ENCODE measurements at regions of chr9 and their contacts with region 1.

Region 1: GRCh38 chr9:134449221-134449894 is 123.1 kb downstream of the RXRA start:
- DNase-seq: peak; percentile 82
- H3K4me3 ChIP-seq: no peak overlapping the region
- H3K27ac ChIP-seq: no peak overlapping the region
- H3K4me1 ChIP-seq: no peaks in the 10 kb centered on the region
- H3K27me3 ChIP-seq: no peaks in the 10 kb centered on the region
- CTCF ChIP-seq: peak; percentile 79 to 89

Region 2: DNA sequence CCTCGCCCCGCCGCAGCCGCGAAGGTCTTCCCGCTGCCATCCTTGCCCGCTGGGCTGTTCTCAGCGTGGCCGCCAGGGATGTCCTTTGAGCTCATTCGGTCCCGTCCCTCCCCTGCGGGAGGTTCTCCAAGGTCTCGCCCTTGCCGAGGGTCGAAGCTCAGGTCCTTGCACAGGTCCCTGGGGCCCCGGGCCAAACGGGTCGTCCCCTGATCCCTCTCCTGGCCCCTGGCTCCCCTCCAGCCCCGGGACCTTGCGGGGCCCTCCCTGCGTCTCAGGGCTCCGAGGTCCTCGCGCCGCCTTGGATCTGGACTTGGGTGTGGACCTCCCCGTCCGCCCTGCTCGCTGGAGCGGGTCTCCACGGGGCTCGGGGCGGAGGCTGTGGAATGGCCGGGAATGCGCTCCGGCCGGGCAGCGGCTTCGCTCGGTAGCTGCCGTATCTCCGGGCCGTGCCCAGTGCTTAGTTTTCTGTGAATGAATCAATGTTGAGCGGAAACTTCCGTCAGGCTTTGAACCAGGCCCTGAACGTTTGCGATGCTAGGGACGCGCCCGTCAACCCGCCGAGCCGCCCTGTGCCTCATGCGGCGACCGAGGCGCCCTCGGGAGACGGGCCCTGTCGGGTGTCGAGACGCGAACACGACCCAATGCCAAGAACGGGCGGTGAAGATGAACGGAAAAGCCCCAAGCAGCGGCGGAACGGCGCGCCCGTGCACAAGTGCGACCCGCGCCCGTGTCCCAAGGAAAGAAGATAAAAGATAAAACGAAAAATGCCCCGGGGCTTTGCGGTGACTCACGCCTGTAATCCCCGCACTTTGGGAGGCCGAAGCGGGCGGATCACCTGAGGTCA is 285.8 kb before region 1 on chr9:
- CTCF ChIA-PET with region 1: no interaction called
- dilution Hi-C with region 1: no loop called
- in situ Hi-C with region 1: loop called (anchors 5 to 10 kb)
- intact Hi-C with region 1: no loop called
- DNase-seq: peak; percentile 25
- H3K4me3 ChIP-seq: peak overlapping the region; percentile 24 to 45 (median 41)
- H3K27ac ChIP-seq: no peak overlapping the region
- H3K4me1 ChIP-seq: peaks cover 5% of the 10 kb centered on the region
- H3K27me3 ChIP-seq: no peaks in the 10 kb centered on the region
- CTCF ChIP-seq: peak in 1 of 2 donors; percentile 13

Region 3: GRCh38 chr9:134570151-134570621 is 120.8 kb after region 1 on chr9:
- CTCF ChIA-PET with region 1: no interaction called
- dilution Hi-C with region 1: no loop called
- in situ Hi-C with region 1: no loop called
- intact Hi-C with region 1: no loop called
- DNase-seq: no peak
- H3K4me3 ChIP-seq: no peak overlapping the region
- H3K27ac ChIP-seq: no peak overlapping the region
- H3K4me1 ChIP-seq: no peaks in the 10 kb centered on the region
- H3K27me3 ChIP-seq: no peaks in the 10 kb centered on the region
- CTCF ChIP-seq: no peak

Region 4: GRCh38 chr9:134660407-134660806 is 211.0 kb after region 1 on chr9:
- CTCF ChIA-PET with region 1: interaction called, 3 read pairs
- dilution Hi-C with region 1: no loop called
- in situ Hi-C with region 1: no loop called
- intact Hi-C with region 1: loop called (anchors 1 kb)
- DNase-seq: no peak
- H3K4me3 ChIP-seq: no peak overlapping the region
- H3K27ac ChIP-seq: no peak overlapping the region
- H3K4me1 ChIP-seq: no peaks in the 10 kb centered on the region
- H3K27me3 ChIP-seq: no peaks in the 10 kb centered on the region
- CTCF ChIP-seq: peak; percentile 31 to 40

Region 5: DNA sequence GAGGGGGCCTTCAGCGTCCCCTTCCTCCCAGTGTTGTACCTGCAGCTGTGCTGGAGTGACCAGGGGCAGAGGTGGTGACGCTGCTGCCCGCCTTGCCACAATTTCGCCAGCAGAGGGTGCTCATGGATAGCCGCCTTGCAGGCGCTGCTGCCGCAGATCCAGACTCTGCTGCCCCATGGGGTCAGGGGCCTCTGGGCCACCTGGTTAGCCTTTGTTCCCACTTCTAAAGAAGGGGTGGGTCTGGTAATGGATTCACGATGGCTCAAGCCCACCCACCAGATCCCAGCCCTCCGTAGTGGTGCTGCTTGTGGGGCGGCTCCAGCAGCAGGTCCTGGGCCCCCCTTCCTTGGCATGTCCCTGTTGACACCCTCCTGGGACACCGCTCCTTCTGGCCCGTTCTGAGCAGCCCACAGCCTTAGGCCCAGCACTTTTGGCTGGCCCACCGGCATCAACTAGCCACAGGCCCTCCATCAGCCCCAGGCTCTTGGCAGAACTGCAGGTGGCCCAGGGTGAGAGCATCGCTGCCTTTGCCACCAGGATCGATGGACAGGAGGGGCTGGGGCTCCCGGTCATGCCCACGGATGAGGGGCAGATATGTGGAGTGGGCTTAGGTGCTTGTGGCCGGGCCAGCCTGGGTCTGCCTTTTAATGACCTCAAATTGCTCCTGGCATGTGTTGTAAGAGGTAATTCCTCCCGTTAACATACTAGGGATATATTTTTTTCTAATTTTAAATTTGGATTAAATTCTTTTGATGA is 249.4 kb after region 1 on chr9:
- CTCF ChIA-PET with region 1: no interaction called
- dilution Hi-C with region 1: no loop called
- in situ Hi-C with region 1: no loop called
- intact Hi-C with region 1: loop called (anchors 1 kb)
- DNase-seq: peak; percentile 4
- H3K4me3 ChIP-seq: no peak overlapping the region
- H3K27ac ChIP-seq: no peak overlapping the region
- H3K4me1 ChIP-seq: no peaks in the 10 kb centered on the region
- H3K27me3 ChIP-seq: no peaks in the 10 kb centered on the region
- CTCF ChIP-seq: peak; percentile 32 to 53

Region 6: GRCh38 chr9:134858051-134858841 is 408.9 kb after region 1 on chr9:
- CTCF ChIA-PET with region 1: no interaction called
- dilution Hi-C with region 1: no loop called
- in situ Hi-C with region 1: no loop called
- intact Hi-C with region 1: loop called (anchors 1 kb)
- DNase-seq: peak; percentile 72
- H3K4me3 ChIP-seq: no peak overlapping the region
- H3K27ac ChIP-seq: no peak overlapping the region
- H3K4me1 ChIP-seq: no peaks in the 10 kb centered on the region
- H3K27me3 ChIP-seq: no peaks in the 10 kb centered on the region
- CTCF ChIP-seq: peak in 1 of 2 donors; percentile 18

Region 7: DNA sequence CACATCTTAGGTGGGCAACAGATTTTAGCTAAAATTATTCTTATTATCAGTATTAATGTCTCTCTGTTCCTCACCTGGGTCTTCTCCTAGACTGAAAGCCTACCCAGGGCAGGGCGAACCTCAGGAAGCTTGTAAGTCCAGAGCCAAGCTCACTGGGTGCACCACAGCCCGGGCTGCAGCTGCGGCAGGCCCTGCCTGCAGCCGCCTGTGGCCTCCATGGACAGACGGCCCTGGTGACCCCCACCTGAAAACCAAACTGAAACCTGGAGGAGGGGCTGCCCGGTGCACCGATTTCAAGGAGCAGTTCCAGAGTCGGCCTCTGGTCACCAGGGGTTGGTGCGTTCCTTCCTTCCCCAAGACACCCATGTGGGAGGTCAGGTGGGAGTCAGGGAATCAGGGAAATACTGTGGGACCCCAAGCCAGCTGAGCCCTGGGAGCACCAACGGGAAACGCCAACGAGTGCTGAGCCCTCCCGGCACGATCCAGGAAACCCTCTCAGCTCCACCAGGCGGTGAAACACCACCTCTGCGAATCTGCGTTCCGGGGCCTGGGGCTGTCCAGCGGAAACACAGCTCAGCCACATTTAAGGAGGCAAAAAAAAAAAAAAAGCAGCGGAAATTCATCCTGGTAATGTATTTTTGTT is 961.6 kb after region 1 on chr9:
- CTCF ChIA-PET with region 1: interaction called, 6 read pairs
- dilution Hi-C with region 1: loop called (anchors 10 kb)
- in situ Hi-C with region 1: no loop called
- intact Hi-C with region 1: no loop called
- DNase-seq: no peak
- H3K4me3 ChIP-seq: no peak overlapping the region
- H3K27ac ChIP-seq: no peak overlapping the region
- H3K4me1 ChIP-seq: no peaks in the 10 kb centered on the region
- H3K27me3 ChIP-seq: no peaks in the 10 kb centered on the region
- CTCF ChIP-seq: no peak

Measured in mammary epithelial cell (primary cell).